SK-N-SH (cell line): ENCODE measurements at regions of chr15 and their contacts with region 1.

Region 1: DNA sequence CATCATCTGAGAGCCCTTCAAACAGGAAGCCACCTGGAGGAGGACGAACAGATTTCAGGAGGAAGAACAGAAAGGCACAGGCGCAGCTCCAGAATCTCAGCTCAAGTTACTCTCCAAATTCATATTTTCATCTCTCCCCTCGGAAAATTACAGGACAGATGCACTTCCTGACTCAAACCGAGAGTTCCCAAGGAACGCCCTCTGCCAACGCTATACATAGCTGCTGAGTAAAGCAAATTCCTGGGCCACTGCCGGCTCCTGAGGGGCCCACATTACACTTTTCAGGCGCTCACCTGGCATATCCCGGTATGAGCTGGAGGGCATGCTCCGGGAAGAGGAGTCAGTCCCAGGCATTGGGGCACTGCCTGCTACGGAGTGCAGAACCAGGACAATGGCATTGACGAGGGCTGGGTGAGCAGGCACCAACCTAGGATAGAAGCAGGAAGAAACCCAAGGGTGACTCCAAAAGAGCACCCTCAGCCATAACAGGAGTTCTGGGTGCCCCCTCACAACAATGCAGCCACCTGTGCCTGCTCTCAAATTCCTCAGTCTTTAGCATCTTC is 11.2 kb downstream of the UBL7 start:
- DNase-seq: no peak
- H3K4me3 ChIP-seq: no peak overlapping the region
- H3K27ac ChIP-seq: no peak overlapping the region
- H3K4me1 ChIP-seq: no peaks in the 10 kb centered on the region
- H3K27me3 ChIP-seq: no peaks in the 10 kb centered on the region
- CTCF ChIP-seq: no peak
- EP300 ChIP-seq: no peak
- RAD21 ChIP-seq: no peak

Region 2: GRCh38 chr15:74422650-74423430 is 26.9 kb before region 1 on chr15:
- CTCF ChIA-PET with region 1: no interaction called
- POLR2A ChIA-PET with region 1: no interaction called
- DNase-seq: no peak
- H3K4me3 ChIP-seq: no peak overlapping the region
- H3K27ac ChIP-seq: no peak overlapping the region; a peak in 1 of 4 replicates
- H3K4me1 ChIP-seq: peaks cover 21 to 34% of the 10 kb centered on the region in 2 experiments; a peak in 3 of 4 replicates
- H3K27me3 ChIP-seq: no peaks in the 10 kb centered on the region
- CTCF ChIP-seq: no peak
- EP300 ChIP-seq: peak in 1 of 2 experiments; percentile 63; a peak in 1 of 4 replicates
- RAD21 ChIP-seq: no peak

Region 3: GRCh38 chr15:74438721-74439316 is 10.9 kb before region 1 on chr15:
- CTCF ChIA-PET with region 1: interaction called, 16 read pairs
- POLR2A ChIA-PET with region 1: interaction called, 3 read pairs
- DNase-seq: peak; percentile 85
- H3K4me3 ChIP-seq: no peak overlapping the region; a peak in 1 of 4 replicates
- H3K27ac ChIP-seq: no peak overlapping the region
- H3K4me1 ChIP-seq: peaks cover 0 to 14% of the 10 kb centered on the region in 2 experiments; a peak in 1 of 4 replicates
- H3K27me3 ChIP-seq: no peaks in the 10 kb centered on the region
- CTCF ChIP-seq: peak; percentile 92
- EP300 ChIP-seq: no peak
- RAD21 ChIP-seq: peak; percentile 94